K562 (cell line): ENCODE measurements at regions of chr17 and their contacts with region 1.

Region 1: GRCh38 chr17:75940724-75941441 is at the start of gene FBF1:
- DNase-seq: peak; percentile 95 to 97 (median 97)
- ATAC-seq: peak; percentile 100
- H3K4me3 ChIP-seq: peak within 1 kb of the TSS; percentile 78
- H3K27ac ChIP-seq: peak within 1 kb of the TSS; percentile 84
- H3K4me1 ChIP-seq: peaks cover 0 to 13% of the 10 kb centered on the region in 2 experiments; a peak in 3 of 5 replicates
- H3K27me3 ChIP-seq: no peaks in the 10 kb centered on the region
- CTCF ChIP-seq: no peak; a peak in 1 of 6 replicates
- EP300 ChIP-seq: no peak
- POLR2A ChIP-seq: peak; percentile 97
- RAD21 ChIP-seq: no peak
- polyA plus RNA-seq, gene FBF1: 0.46 to 0.55 TPM

Region 2: GRCh38 chr17:75557075-75557882 is 383.6 kb before region 1 on chr17:
- CTCF ChIA-PET with region 1: no interaction called
- POLR2A ChIA-PET with region 1: no interaction called
- in situ Hi-C with region 1: no loop called
- intact Hi-C with region 1: no loop called
- DNase-seq: peak; percentile 78 to 82 (median 78)
- ATAC-seq: peak; percentile 85
- H3K4me3 ChIP-seq: no peak overlapping the region
- H3K27ac ChIP-seq: no peak overlapping the region; the same call in 2 of the 3 replicates
- H3K4me1 ChIP-seq: peaks cover 20 to 53% of the 10 kb centered on the region in 2 experiments
- H3K27me3 ChIP-seq: no peaks in the 10 kb centered on the region
- CTCF ChIP-seq: no peak
- EP300 ChIP-seq: no peak
- POLR2A ChIP-seq: no peak
- RAD21 ChIP-seq: no peak

Region 3: DNA sequence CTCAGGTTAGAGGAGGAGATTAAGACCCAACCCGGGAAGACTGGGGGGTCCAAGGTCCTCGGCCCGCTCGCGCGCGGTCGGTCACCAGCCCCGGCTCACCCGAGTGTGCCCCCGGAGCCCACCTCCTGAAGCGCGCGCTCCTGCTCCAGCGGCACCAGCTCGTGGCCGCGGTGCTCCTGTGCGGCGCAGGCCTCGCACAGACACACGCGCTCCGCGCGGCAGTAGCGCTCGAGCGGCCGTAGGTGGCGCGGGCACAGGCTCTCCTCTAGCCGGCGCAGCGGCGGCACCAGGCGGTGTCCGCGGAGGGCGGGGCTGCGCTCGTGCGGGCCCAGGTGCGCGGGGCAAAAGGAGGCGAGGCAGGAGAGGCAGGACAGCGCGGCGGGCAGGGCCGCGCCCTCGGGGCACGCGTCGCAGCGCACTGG is 63.1 kb before region 1 on chr17:
- CTCF ChIA-PET with region 1: no interaction called
- POLR2A ChIA-PET with region 1: no interaction called
- in situ Hi-C with region 1: no loop called
- intact Hi-C with region 1: no loop called
- DNase-seq: peak in 3 of 4 experiments; percentile 54 to 65 (median 63)
- ATAC-seq: peak; percentile 65
- H3K4me3 ChIP-seq: peak overlapping the region; percentile 45
- H3K27ac ChIP-seq: no peak overlapping the region
- H3K4me1 ChIP-seq: peaks cover 7 to 67% of the 10 kb centered on the region in 2 experiments
- H3K27me3 ChIP-seq: no peaks in the 10 kb centered on the region
- CTCF ChIP-seq: peak in 2 of 3 experiments; percentile 46 to 69; a peak in 4 of 6 replicates
- EP300 ChIP-seq: no peak
- POLR2A ChIP-seq: no peak
- RAD21 ChIP-seq: peak in 1 of 2 experiments; percentile 34; a peak in 2 of 4 replicates

Region 4: DNA sequence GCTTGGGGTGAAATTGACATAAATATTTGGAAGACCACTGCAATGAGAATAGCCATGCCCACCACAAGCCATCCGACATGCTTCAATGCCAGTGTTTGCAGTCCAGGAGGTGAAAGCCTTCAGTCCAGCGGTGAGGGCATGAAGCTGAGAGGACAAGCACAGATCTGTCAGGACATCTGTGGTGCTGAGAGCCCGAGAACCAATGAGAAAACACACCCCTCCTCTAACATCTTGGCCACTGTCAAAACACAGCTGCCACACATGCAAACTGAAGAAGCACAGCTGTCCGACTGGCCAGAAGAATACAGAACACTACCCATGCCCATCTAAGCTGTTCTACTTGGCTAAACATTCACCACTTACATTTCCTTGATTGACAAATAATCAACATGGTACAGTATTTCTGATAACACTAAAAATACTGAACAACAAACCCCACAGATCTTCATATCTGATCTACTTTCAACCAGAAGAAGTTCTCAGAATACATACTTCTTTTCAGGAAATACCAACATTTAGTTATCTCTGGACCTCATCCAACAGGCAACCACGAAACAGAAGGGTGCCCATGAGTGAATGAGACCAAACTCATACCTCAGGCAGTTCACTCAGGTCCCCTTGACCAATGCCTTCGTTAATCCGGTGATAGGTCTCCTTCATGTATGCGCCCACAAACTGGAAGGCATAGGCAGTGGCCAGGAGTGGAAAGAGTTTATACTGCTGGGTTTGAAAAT is 10.1 kb after region 1 on chr17:
- CTCF ChIA-PET with region 1: no interaction called
- POLR2A ChIA-PET with region 1: interaction called, 15 read pairs
- in situ Hi-C with region 1: no loop called
- intact Hi-C with region 1: no loop called
- DNase-seq: peak in 2 of 4 experiments; percentile 21 to 30
- ATAC-seq: no peak
- H3K4me3 ChIP-seq: no peak overlapping the region
- H3K27ac ChIP-seq: no peak overlapping the region; the same call in 2 of the 3 replicates
- H3K4me1 ChIP-seq: peaks cover 3 to 18% of the 10 kb centered on the region in 2 experiments; a peak in 4 of 5 replicates
- H3K27me3 ChIP-seq: no peaks in the 10 kb centered on the region
- CTCF ChIP-seq: no peak
- EP300 ChIP-seq: peak; percentile 40; the same call in 1 of the 2 replicates
- POLR2A ChIP-seq: no peak
- RAD21 ChIP-seq: no peak

Region 5: DNA sequence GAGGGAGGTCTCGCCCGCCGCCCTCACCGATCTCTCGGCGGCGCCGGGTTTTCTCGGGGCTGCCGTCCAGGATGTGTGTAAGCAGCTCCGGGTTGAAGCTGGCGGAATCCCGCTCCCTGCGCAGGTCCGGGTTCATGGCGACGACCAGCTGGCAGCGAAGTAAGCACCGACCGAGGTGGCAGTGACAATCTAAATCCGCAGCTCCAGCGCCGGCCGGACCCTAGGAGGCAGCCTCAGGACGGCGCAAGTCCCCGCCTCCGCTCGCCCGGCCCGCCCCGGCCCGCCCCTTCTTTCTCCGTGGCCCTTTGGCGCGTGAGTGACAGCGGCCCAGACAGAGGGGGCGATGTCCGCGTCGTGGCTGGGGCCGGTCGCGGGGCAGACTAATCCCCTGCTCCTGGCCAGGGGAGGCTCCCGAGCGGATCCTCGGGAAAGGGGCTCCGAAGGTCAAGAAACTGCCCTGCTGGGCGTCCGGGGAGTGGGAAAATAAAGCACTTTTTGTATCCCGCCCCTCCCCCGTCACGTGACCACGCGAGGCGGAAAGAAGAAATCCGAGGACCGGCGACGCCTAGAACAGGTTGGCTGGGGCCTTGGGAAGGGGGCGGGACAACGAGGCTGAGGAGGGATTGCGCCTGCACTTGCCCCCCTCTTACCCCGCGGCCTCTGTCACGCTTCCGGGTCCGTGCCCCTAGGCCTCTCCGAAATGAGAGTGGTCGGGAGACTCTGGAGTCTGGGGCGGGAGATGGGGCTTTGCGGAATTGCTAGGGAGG is 38.2 kb after region 1 on chr17 and contains the starts of genes ACOX1 and TEN1:
- CTCF ChIA-PET with region 1: no interaction called
- POLR2A ChIA-PET with region 1: interaction called, 6 read pairs
- in situ Hi-C with region 1: no loop called
- intact Hi-C with region 1: loop called (anchors 5 kb)
- DNase-seq: peak; percentile 91 to 98 (median 92)
- ATAC-seq: peak; percentile 94
- H3K4me3 ChIP-seq: peak within 1 kb of the TSS; percentile 67
- H3K27ac ChIP-seq: peak within 1 kb of the TSS; percentile 78
- H3K4me1 ChIP-seq: peaks cover 34 to 39% of the 10 kb centered on the region in 2 experiments
- H3K27me3 ChIP-seq: no peaks in the 10 kb centered on the region
- CTCF ChIP-seq: peak; percentile 20 to 47 (median 28); a peak in 4 of 6 replicates
- EP300 ChIP-seq: peak; percentile 24; the same call in 1 of the 2 replicates
- POLR2A ChIP-seq: peak; percentile 96
- RAD21 ChIP-seq: peak in 1 of 2 experiments; percentile 27; a peak in 2 of 4 replicates
- polyA plus RNA-seq, gene ACOX1: 8.6 to 9.5 TPM
- polyA plus RNA-seq, gene TEN1: 1.3 to 3.3 TPM

Region 6: DNA sequence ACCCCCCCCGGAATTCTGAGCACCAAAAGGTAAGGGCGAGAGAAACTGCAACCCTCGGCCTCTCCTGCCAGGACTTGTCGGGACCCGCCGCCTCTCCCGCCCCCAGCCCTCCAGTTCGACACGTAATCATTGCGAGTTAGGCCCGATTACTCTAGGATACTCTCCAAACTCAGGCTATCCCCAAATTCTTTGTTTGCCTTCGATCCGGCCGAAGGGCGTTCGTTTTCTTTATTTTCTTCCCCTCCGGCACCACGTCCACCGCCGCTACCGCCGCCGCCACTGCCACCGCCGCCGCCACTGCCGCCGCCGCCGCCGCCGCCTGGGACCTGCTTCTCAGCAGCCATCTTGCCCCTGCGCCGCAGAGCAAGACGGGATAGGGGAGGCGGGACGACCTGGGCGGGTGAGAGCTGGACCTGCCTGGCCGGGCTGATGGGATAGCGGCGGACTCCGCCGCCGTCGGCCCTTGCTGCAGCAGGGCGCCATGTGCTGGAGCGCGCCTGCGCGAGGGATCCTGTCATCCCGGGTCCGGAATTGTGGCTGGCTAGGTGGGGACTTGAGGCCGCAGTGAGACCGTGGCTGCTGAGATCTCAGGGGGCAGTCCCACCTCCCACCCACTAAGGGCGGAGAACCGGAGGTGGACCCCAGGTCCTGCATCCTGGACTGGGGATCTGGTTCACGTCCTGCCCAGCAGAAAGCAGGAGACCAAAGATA is 131.4 kb after region 1 on chr17 and contains the start of gene SRP68:
- CTCF ChIA-PET with region 1: no interaction called
- POLR2A ChIA-PET with region 1: no interaction called
- in situ Hi-C with region 1: no loop called
- intact Hi-C with region 1: no loop called
- DNase-seq: peak; percentile 92 to 95 (median 95)
- ATAC-seq: peak; percentile 99
- H3K4me3 ChIP-seq: peak within 1 kb of the TSS; percentile 79
- H3K27ac ChIP-seq: peak within 1 kb of the TSS; percentile 80
- H3K4me1 ChIP-seq: peaks cover 5 to 45% of the 10 kb centered on the region in 2 experiments
- H3K27me3 ChIP-seq: peaks cover 12 to 26% of the 10 kb centered on the region in 2 experiments; a peak in 3 of 5 replicates
- CTCF ChIP-seq: no peak
- EP300 ChIP-seq: no peak
- POLR2A ChIP-seq: peak; percentile 96
- RAD21 ChIP-seq: no peak; a peak in 1 of 4 replicates
- polyA plus RNA-seq, gene SRP68: 29.4 to 31.4 TPM